Body of pancreas (tissue), 4 donors: ENCODE measurements at regions of chr10 and their contacts with region 1.

Region 1: GRCh38 chr10:34789966-34790506 is 25.1 kb downstream of the PARD3 start:
- DNase-seq: peak; percentile 40 to 69 (median 54)
- ATAC-seq: peak; percentile 79
- H3K4me3 ChIP-seq: no peak overlapping the region
- H3K27ac ChIP-seq: peak overlapping the region in 3 of 4 donors; percentile 71 to 84 (median 76)
- H3K4me1 ChIP-seq: peaks cover 53% of the 10 kb centered on the region
- H3K27me3 ChIP-seq: no peaks in the 10 kb centered on the region
- CTCF ChIP-seq: peak in 1 of 7 experiments; percentile 1
- POLR2A ChIP-seq: no peak

Region 2: DNA sequence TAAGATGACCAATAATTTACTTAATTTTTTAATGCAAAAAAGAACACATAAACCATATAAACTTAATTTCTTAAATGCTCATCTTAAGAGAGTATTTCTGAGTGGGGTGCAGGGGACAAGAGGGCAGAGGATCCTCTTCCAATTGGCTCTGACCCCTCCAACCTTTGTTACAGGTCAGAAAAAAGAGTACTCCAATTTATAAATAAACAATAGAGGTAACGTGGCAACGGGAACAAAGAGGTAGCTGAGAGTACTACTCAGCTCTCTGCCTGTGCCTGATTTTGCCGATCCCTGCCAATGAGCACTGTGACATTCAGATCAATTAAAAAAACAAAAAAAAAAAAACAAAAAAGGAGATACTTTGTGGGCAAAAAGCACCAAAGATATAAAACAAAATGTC is 282.8 kb before region 1 on chr10:
- intact Hi-C with region 1: no loop called
- DNase-seq: peak in 1 of 4 donors; percentile 6
- ATAC-seq: peak; percentile 68
- H3K4me3 ChIP-seq: no peak overlapping the region
- H3K27ac ChIP-seq: no peak overlapping the region
- H3K4me1 ChIP-seq: peaks cover 27% of the 10 kb centered on the region
- H3K27me3 ChIP-seq: no peaks in the 10 kb centered on the region
- CTCF ChIP-seq: no peak
- POLR2A ChIP-seq: no peak

Region 3: GRCh38 chr10:34650156-34650555 is 139.9 kb before region 1 on chr10:
- intact Hi-C with region 1: no loop called
- DNase-seq: no peak
- ATAC-seq: no peak
- H3K4me3 ChIP-seq: no peak overlapping the region
- H3K27ac ChIP-seq: no peak overlapping the region
- H3K4me1 ChIP-seq: peaks cover 12% of the 10 kb centered on the region
- H3K27me3 ChIP-seq: no peaks in the 10 kb centered on the region
- CTCF ChIP-seq: no peak
- POLR2A ChIP-seq: no peak

Region 4: GRCh38 chr10:34677591-34677990 is 112.4 kb before region 1 on chr10:
- intact Hi-C with region 1: loop called (anchors 10 kb)
- DNase-seq: no peak
- ATAC-seq: no peak
- H3K4me3 ChIP-seq: no peak overlapping the region
- H3K27ac ChIP-seq: no peak overlapping the region
- H3K4me1 ChIP-seq: peaks cover 12% of the 10 kb centered on the region
- H3K27me3 ChIP-seq: no peaks in the 10 kb centered on the region
- CTCF ChIP-seq: no peak
- POLR2A ChIP-seq: no peak

Region 5: GRCh38 chr10:34723750-34724149 is 66.3 kb before region 1 on chr10:
- intact Hi-C with region 1: no loop called
- DNase-seq: peak; percentile 45 to 74 (median 60)
- ATAC-seq: peak; percentile 81
- H3K4me3 ChIP-seq: no peak overlapping the region
- H3K27ac ChIP-seq: peak overlapping the region in 1 of 4 donors; percentile 8
- H3K4me1 ChIP-seq: peaks cover 32% of the 10 kb centered on the region
- H3K27me3 ChIP-seq: no peaks in the 10 kb centered on the region
- CTCF ChIP-seq: peak in 6 of 7 experiments; percentile 29 to 78 (median 68)
- POLR2A ChIP-seq: no peak